ENCODE measurements at regions of chr10 and their contacts with region 1.

Region 1: GRCh38 chr10:37871568-37872251 is 14.3 kb upstream of the ZNF248 start:
- DNase-seq: no peak
- ATAC-seq: no peak
- H3K4me3 ChIP-seq: no peak overlapping the region
- H3K27ac ChIP-seq: no peak overlapping the region
- H3K4me1 ChIP-seq: no peaks in the 10 kb centered on the region
- H3K27me3 ChIP-seq: no peaks in the 10 kb centered on the region
- CTCF ChIP-seq: no peak

Region 2: GRCh38 chr10:37831495-37832333 is 40.0 kb before region 1 on chr10:
- intact Hi-C with region 1: loop called in 1 of 2 experiments (anchors 2 kb)
- DNase-seq: no peak
- ATAC-seq: no peak
- H3K4me3 ChIP-seq: no peak overlapping the region
- H3K27ac ChIP-seq: no peak overlapping the region
- H3K4me1 ChIP-seq: no peaks in the 10 kb centered on the region
- H3K27me3 ChIP-seq: no peaks in the 10 kb centered on the region
- CTCF ChIP-seq: no peak